ENCODE measurements at regions of chr12 and their contacts with region 1.

Region 1: DNA sequence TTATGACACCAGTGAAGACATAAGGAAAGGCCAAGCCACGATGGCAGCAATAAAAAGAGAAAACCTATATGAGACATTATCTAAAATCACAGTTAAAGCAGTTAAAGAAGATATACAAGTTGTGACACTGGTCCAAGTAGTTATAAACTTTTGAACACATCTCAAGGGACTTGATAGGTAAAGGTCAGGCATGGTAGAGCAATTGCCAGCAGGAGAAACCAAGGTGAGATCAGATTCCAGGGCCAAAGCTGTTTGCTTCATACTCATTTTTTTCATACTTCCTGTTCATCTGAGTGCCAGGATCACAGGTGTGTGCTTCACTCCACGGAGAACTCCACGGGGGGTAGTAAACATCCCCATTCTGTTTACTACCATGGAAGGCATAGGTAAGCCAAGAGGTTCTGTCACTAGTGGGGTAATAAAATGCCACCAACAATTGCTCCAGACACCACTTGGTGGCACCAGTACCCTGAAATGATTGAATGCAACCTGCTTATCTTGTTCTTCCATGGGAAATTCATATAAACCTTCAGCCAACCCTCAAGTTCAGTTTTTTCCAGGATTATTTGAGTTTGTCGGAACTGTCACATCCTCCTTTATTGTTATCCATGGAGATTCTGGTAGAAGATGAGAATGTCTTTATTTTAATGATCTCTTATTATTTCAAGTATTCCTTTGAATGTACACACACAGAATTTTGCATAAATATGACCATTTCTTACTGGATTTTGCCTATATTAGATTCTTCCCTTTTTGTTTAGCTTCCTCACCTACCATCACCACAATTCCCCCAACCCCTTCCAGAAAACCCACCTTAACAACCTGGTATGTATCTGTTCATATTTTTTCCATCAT is 59.2 kb upstream of the TSPAN8 start:
- DNase-seq: no peak
- ATAC-seq: no peak
- H3K4me3 Mint-ChIP-seq: no peak overlapping the region
- H3K27ac Mint-ChIP-seq: no peak overlapping the region
- H3K4me1 Mint-ChIP-seq: no peaks in the 10 kb centered on the region
- H3K27me3 Mint-ChIP-seq: no peaks in the 10 kb centered on the region

Region 2: GRCh38 chr12:71392521-71393145 is 175.7 kb after region 1 on chr12:
- CTCF ChIA-PET with region 1: no interaction called
- POLR2A ChIA-PET with region 1: no interaction called
- intact Hi-C with region 1: loop called (anchors 5 to 10 kb)
- DNase-seq: peak; percentile 6
- ATAC-seq: peak; percentile 69
- H3K4me3 Mint-ChIP-seq: no peak overlapping the region
- H3K27ac Mint-ChIP-seq: no peak overlapping the region
- H3K4me1 Mint-ChIP-seq: no peaks in the 10 kb centered on the region
- H3K27me3 Mint-ChIP-seq: peaks cover 11% of the 10 kb centered on the region